PC-9 (cell line): ENCODE measurements at regions of chr10 and their contacts with region 1.

Region 1: DNA sequence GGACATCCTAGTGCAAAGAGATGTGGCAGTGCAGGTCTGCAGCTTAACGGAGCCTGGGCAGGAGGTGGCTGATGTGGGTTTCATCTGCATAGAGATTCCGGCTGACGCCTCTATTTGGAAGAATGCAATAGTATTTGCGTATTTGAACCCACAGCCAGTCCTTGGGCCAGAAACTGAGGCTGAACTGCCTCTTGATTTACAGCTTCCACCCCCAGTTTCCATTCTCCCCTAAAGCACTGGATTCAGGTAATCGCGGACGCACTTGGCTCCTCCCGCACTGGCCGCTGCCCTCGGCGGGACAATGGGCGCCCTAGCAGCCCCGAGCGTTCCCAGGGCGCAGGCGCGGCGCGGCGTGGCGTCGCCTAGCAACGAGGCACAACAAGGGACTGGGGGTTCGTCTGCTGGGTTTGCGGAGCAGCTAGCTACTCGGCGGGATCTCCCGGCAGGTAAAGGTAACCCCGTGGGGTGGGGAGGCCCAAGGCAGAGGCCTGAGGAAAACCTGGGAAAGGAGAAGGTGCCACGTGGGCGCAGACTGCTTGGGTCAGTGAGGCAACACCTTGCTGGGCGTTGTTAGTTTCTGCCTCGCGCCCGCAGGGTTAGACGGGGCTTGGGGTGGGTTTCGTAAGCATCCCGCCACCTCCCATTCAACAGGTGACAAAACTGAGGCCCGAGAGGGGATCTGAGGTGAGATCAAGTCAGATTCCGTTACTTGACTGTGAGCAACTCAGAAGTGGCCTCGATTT is at the start of gene ARMC3:
- DNase-seq: peak; percentile 52 to 90
- H3K4me3 ChIP-seq: peak within 1 kb of the TSS; percentile 72
- H3K27ac ChIP-seq: no peak within 1 kb of the TSS
- H3K4me1 ChIP-seq: peaks cover 5% of the 10 kb centered on the region; the same call in 1 of the 2 replicates
- H3K27me3 ChIP-seq: no peaks in the 10 kb centered on the region
- CTCF ChIP-seq: no peak
- total RNA-seq, gene ARMC3: 10.0 and 14.4 TPM in 2 replicates

Region 2: DNA sequence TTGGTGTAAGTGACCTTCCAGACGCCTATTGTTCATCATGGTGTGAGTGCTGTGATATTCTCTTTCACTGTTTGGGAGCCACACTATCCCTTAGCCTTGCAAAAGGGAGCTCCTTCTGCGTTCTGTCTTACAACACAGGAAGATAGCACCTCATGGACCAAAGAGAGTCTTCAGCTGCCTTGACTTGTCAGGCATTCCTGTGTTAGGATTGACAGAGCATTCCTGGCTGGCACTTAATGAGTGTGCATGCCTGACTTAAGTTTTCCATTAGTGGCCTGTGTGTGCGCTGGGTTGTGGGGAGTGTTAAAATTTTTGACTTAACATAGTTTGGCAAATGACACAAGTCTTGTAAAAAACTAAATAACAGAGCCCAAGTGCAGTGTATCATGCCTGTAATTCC is 145.7 kb after region 1 on chr10:
- CTCF ChIA-PET with region 1: no interaction called
- POLR2A ChIA-PET with region 1: interaction called, 11 read pairs
- intact Hi-C with region 1: no loop called
- DNase-seq: no peak
- H3K4me3 ChIP-seq: no peak overlapping the region
- H3K27ac ChIP-seq: no peak overlapping the region
- H3K4me1 ChIP-seq: no peaks in the 10 kb centered on the region
- H3K27me3 ChIP-seq: no peaks in the 10 kb centered on the region
- CTCF ChIP-seq: no peak